ENCODE measurements at regions of chr9 and their contacts with region 1.

Region 1: DNA sequence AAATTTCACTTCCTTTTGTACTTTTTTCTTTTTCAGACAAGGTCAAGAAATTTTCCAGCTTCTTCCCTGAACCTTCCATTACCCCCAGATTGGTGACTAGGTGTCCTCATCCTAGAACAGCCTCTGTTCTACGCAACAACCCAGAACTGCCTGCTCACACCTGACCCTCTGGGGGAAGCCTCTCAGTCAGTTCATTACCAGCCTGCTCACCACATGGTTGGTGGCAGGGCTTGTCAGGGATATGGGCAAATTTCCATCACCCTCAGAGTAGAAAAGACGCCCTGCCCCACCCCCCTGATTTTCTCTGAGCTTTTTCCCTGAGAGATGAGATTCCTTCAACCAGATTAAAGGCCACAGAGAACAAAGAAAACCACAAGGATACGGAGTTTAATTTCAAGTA is 5.3 kb upstream of the CFAP95 start:
- DNase-seq: no peak
- ATAC-seq: no peak
- H3K4me3 Mint-ChIP-seq: no peak overlapping the region
- H3K27ac Mint-ChIP-seq: no peak overlapping the region
- H3K4me1 Mint-ChIP-seq: peaks cover 7% of the 10 kb centered on the region
- H3K27me3 Mint-ChIP-seq: peaks cover 18% of the 10 kb centered on the region
- CTCF ChIP-seq: no peak

Region 2: GRCh38 chr9:69265891-69266290 is 549.4 kb before region 1 on chr9:
- CTCF ChIA-PET with region 1: no interaction called
- POLR2A ChIA-PET with region 1: no interaction called
- intact Hi-C with region 1: no loop called
- DNase-seq: no peak
- ATAC-seq: no peak
- H3K4me3 Mint-ChIP-seq: no peak overlapping the region
- H3K27ac Mint-ChIP-seq: no peak overlapping the region
- H3K4me1 Mint-ChIP-seq: no peaks in the 10 kb centered on the region
- H3K27me3 Mint-ChIP-seq: peaks cover 5% of the 10 kb centered on the region
- CTCF ChIP-seq: no peak

Region 3: DNA sequence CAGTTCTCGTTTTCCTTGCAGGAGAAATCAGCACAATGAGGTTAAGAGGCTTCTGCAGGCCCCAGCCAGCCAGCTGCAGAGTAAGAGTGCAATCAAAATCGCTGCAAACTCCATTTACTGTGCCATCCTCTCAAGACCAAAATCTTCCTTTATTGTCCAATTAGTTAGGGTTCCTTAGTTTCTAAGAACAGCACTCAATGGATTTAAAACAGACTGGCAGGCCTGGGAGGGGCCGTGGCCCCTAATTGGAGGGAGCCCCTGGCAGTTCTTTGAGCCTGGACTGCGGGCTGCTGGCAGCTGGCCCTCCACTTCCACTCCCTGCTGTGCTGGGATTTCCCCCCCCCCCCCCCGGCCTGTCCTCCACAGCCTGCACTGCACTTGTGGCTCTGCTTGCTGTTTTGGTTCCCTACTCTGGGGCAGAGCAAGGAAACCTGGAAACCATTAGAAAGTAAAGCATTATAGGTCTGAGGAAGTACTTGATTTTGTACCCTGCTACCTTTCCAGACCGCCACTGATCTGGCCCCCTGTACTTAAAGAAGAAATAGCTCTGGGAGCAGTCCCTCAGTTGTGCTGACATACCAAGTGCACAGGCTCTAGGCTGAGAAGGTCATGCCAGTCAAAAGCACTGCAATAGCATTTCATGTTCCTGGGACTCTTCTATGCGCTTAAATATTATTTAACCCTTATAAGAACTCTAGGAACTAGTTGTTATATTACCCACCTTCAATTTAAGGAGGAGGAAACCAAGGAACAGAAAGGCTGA is 272.2 kb before region 1 on chr9:
- CTCF ChIA-PET with region 1: no interaction called
- POLR2A ChIA-PET with region 1: no interaction called
- intact Hi-C with region 1: no loop called
- DNase-seq: no peak
- ATAC-seq: no peak
- H3K4me3 Mint-ChIP-seq: no peak overlapping the region
- H3K27ac Mint-ChIP-seq: no peak overlapping the region
- H3K4me1 Mint-ChIP-seq: no peaks in the 10 kb centered on the region
- H3K27me3 Mint-ChIP-seq: peaks cover 3% of the 10 kb centered on the region
- CTCF ChIP-seq: no peak

Region 4: DNA sequence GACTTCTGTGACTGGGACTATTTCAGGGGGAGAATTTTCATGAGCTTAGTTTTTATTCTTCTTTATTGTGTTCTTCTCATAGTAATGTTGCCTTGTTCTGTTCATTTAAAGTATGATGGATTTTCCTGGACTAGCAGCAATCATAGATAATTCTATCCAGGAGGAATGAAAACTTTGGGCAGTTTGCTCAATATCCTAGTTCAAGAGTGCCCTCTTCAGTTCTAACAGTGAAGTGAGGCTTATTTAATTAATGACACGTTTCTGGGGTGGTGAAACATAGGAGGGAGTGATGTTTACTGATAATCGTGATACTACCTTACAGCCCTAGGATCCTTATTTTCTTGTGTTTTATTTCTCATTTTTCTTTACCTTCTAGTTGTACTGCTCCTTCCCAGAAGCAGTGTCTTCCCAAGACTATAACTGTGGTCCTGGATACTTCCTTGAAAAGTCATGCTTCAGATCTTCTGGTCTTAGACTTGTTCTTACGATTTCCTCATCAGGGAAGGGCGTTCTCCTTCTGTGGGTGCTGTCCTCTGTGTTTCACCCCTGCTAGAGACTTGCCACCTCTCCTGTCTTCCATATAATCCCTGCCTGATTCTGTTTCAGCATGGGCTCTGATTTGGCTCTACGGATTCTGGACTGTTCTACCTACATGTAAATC is 62.7 kb after region 1 on chr9:
- CTCF ChIA-PET with region 1: no interaction called
- POLR2A ChIA-PET with region 1: no interaction called
- intact Hi-C with region 1: no loop called
- DNase-seq: no peak
- ATAC-seq: no peak
- H3K4me3 Mint-ChIP-seq: no peak overlapping the region
- H3K27ac Mint-ChIP-seq: no peak overlapping the region
- H3K4me1 Mint-ChIP-seq: no peaks in the 10 kb centered on the region
- H3K27me3 Mint-ChIP-seq: peaks cover 11% of the 10 kb centered on the region
- CTCF ChIP-seq: no peak

Region 5: DNA sequence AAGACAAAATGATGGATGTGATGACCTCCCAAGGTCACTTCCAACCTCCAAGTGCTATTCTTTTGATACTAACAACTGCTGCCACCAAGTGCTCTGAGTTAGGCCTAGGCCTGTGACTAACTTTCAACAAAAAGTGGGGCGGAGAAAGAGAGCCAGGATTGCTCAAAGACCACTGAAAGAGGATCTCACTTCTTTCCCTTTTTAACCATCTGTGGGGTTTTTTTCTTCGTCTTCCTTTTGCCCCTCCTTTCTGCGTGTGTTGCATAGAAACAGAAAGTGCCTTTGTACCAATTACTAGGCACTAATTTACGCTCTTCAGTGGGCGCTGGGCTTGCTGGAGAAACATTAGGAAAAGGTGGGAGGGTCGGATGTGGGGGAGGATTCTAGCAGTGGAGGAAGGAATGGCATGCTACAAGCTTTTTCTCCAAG is 591.1 kb after region 1 on chr9:
- CTCF ChIA-PET with region 1: no interaction called
- POLR2A ChIA-PET with region 1: interaction called, 10 read pairs
- intact Hi-C with region 1: no loop called
- DNase-seq: no peak
- ATAC-seq: peak; percentile 87
- H3K4me3 Mint-ChIP-seq: peak overlapping the region; percentile 80
- H3K27ac Mint-ChIP-seq: peak overlapping the region; percentile 97
- H3K4me1 Mint-ChIP-seq: peaks cover 64% of the 10 kb centered on the region
- H3K27me3 Mint-ChIP-seq: no peaks in the 10 kb centered on the region
- CTCF ChIP-seq: no peak

Measured in activated B cell treated with CpG ODN at 0.5 μM for 24 hours (primary cell).